ENCODE measurements at regions of chr6 and their contacts with region 1.

Region 1: GRCh38 chr6:105431226-105431625 is 28.3 kb upstream of the PREP start:
- DNase-seq: peak in 3 of 4 experiments; percentile 13 to 57 (median 22)
- ATAC-seq: no peak
- H3K4me3 ChIP-seq: no peak overlapping the region
- H3K27ac ChIP-seq: no peak overlapping the region
- H3K4me1 ChIP-seq: no peaks in the 10 kb centered on the region
- H3K27me3 ChIP-seq: 0 out of 5 replicates have a peak, but pooled peaks cover 0 to 2% of the 10 kb centered on the region in 2 experiments
- CTCF ChIP-seq: peak; percentile 30 to 63 (median 46); a peak in 4 of 6 replicates
- EP300 ChIP-seq: no peak
- POLR2A ChIP-seq: no peak
- RAD21 ChIP-seq: peak; percentile 71 to 72

Region 2: GRCh38 chr6:105094133-105094640 is 337.0 kb before region 1 on chr6:
- CTCF ChIA-PET with region 1: no interaction called
- POLR2A ChIA-PET with region 1: no interaction called
- in situ Hi-C with region 1: loop called (anchors 5 kb)
- intact Hi-C with region 1: no loop called
- DNase-seq: no peak
- ATAC-seq: peak; percentile 70
- H3K4me3 ChIP-seq: no peak overlapping the region
- H3K27ac ChIP-seq: no peak overlapping the region
- H3K4me1 ChIP-seq: no peaks in the 10 kb centered on the region
- H3K27me3 ChIP-seq: peaks cover 3 to 11% of the 10 kb centered on the region in 2 experiments; a peak in 1 of 5 replicates
- CTCF ChIP-seq: peak; percentile 29 to 36 (median 33); a peak in 3 of 6 replicates
- EP300 ChIP-seq: no peak
- POLR2A ChIP-seq: no peak
- RAD21 ChIP-seq: 0 out of 4 replicates have a peak, but pooled peaks of 1 of the 2 experiments have one; percentile 18

Measured in K562 (cell line).